Gastrocnemius medialis (tissue), 4 donors: ENCODE measurements at regions of chr1 and their contacts with region 1.

Region 1: DNA sequence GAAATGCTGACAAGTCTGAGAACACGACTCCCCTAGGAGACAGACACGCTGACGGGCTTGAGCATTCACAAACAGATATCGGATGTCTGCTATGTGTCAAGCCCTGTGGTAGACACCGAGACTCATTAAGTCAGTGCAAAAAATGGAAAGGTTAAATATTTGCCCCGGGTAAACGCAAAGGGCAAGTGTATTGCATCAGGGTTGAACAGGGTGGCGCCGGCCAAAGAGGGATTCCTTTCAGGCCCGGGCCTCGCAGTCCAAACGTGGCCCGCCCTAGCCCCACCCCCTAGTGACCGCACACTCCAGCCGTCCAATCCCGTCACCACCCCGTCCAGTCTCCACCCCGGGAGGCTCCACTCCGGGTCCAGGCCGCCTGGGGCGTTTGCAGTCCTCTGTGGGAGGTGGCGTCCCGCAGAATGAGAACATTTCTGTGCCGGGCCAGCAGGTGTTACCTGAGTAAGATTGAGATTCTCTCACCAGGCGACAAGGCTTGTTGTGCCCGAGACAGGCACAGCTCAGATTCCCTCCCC is 16.3 kb upstream of the TMEM9 start:
- DNase-seq: peak; percentile 99
- ATAC-seq: peak; percentile 70 to 76
- H3K4me3 ChIP-seq: peak overlapping the region; percentile 63 to 76 (median 70)
- H3K27ac ChIP-seq: peak overlapping the region; percentile 95 to 98 (median 96)
- H3K4me1 ChIP-seq: peaks cover 27 to 34% of the 10 kb centered on the region in 2 donors
- H3K27me3 ChIP-seq: no peaks in the 10 kb centered on the region
- CTCF ChIP-seq: no peak
- POLR2A ChIP-seq: peak; percentile 87 to 92

Region 2: GRCh38 chr1:201096035-201096434 is 74.6 kb before region 1 on chr1:
- in situ Hi-C with region 1: no loop called
- intact Hi-C with region 1: loop called (anchors 2 kb)
- DNase-seq: peak; percentile 88 to 98
- ATAC-seq: peak; percentile 60 to 68
- H3K4me3 ChIP-seq: no peak overlapping the region
- H3K27ac ChIP-seq: peak overlapping the region; percentile 89 to 98 (median 96)
- H3K4me1 ChIP-seq: peaks cover 76 to 88% of the 10 kb centered on the region in 2 donors
- H3K27me3 ChIP-seq: no peaks in the 10 kb centered on the region
- CTCF ChIP-seq: no peak
- POLR2A ChIP-seq: peak; percentile 11 to 23

Region 3: GRCh38 chr1:201114236-201115131 is 56.1 kb before region 1 on chr1:
- in situ Hi-C with region 1: no loop called
- intact Hi-C with region 1: loop called (anchors 5 kb)
- DNase-seq: peak; percentile 85 to 94
- ATAC-seq: peak; percentile 85 to 92
- H3K4me3 ChIP-seq: peak overlapping the region; percentile 59 to 84 (median 67)
- H3K27ac ChIP-seq: peak overlapping the region; percentile 89 to 98 (median 96)
- H3K4me1 ChIP-seq: peaks cover 38 to 47% of the 10 kb centered on the region in 2 donors
- H3K27me3 ChIP-seq: no peaks in the 10 kb centered on the region
- CTCF ChIP-seq: peak; percentile 86 to 97 (median 93)
- POLR2A ChIP-seq: peak; percentile 12 to 58

Region 4: DNA sequence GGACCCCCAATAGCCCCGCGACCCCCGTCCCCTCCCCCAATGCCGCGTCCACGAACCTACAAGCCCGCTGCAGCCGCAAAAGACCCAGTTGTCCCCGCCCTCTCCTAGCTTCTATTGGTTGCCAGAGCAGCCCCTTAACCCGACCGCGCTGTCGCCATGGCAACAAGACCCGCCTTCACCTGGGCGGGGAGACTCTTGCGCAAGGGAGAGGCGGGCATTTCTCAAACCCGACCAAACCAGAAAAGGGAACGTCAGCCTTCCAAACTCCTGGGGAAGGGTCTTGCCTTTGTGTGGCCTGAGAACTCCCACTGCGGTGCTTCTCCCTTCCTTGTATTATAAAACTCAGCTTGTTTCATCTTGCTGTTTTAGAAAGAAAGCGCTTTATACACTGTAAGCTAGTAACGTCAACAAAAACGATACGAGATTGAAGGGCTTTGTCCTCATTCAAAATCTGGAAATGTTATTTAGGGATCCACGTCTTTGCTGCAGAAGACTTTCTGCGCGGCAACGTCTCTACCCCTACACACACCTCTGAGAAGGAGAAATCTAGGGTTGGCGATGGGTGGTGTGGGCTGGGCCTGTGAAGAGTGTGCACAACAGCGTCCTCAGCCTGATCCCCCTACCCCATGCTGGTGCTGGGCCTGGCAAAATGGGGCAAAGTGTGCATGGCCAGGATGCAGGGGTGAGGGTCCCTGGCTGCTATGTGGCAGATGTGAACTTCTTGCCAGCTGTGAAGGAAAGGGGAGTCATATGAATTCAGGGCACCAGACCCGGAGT is 16.0 kb before region 1 on chr1 and contains the start of gene TMEM9:
- in situ Hi-C with region 1: no loop called
- intact Hi-C with region 1: loop called (anchors 1 kb)
- DNase-seq: peak; percentile 93 to 96
- ATAC-seq: peak; percentile 94 to 96
- H3K4me3 ChIP-seq: peak within 1 kb of the TSS; percentile 70 to 84 (median 77)
- H3K27ac ChIP-seq: peak within 1 kb of the TSS; percentile 73 to 78 (median 76)
- H3K4me1 ChIP-seq: peaks cover 19 to 33% of the 10 kb centered on the region in 2 donors
- H3K27me3 ChIP-seq: no peaks in the 10 kb centered on the region
- CTCF ChIP-seq: no peak
- POLR2A ChIP-seq: no peak
- total RNA-seq, gene TMEM9: 11.9 to 38.8 (median 13.0) TPM

Region 5: GRCh38 chr1:201184307-201185122 is 13.9 kb after region 1 on chr1:
- in situ Hi-C with region 1: no loop called
- intact Hi-C with region 1: loop called (anchors 1 kb)
- DNase-seq: peak; percentile 66 to 88
- ATAC-seq: peak; percentile 94 to 98
- H3K4me3 ChIP-seq: no peak overlapping the region
- H3K27ac ChIP-seq: peak overlapping the region; percentile 76 to 92 (median 84)
- H3K4me1 ChIP-seq: peaks cover 38 to 40% of the 10 kb centered on the region in 2 donors
- H3K27me3 ChIP-seq: no peaks in the 10 kb centered on the region
- CTCF ChIP-seq: peak; percentile 52 to 74 (median 71)
- POLR2A ChIP-seq: peak; percentile 16 to 21

Region 6: GRCh38 chr1:201419746-201420607 is 249.4 kb after region 1 on chr1:
- in situ Hi-C with region 1: no loop called
- intact Hi-C with region 1: loop called (anchors 5 kb)
- DNase-seq: peak in 1 of 2 donors; percentile 54
- ATAC-seq: peak in 1 of 2 donors; percentile 11
- H3K4me3 ChIP-seq: peak overlapping the region in 2 of 4 donors; percentile 2 to 37
- H3K27ac ChIP-seq: peak overlapping the region; percentile 93
- H3K4me1 ChIP-seq: peaks cover 55% of the 10 kb centered on the region in 2 donors
- H3K27me3 ChIP-seq: no peaks in the 10 kb centered on the region
- CTCF ChIP-seq: no peak
- POLR2A ChIP-seq: no peak

Region 7: DNA sequence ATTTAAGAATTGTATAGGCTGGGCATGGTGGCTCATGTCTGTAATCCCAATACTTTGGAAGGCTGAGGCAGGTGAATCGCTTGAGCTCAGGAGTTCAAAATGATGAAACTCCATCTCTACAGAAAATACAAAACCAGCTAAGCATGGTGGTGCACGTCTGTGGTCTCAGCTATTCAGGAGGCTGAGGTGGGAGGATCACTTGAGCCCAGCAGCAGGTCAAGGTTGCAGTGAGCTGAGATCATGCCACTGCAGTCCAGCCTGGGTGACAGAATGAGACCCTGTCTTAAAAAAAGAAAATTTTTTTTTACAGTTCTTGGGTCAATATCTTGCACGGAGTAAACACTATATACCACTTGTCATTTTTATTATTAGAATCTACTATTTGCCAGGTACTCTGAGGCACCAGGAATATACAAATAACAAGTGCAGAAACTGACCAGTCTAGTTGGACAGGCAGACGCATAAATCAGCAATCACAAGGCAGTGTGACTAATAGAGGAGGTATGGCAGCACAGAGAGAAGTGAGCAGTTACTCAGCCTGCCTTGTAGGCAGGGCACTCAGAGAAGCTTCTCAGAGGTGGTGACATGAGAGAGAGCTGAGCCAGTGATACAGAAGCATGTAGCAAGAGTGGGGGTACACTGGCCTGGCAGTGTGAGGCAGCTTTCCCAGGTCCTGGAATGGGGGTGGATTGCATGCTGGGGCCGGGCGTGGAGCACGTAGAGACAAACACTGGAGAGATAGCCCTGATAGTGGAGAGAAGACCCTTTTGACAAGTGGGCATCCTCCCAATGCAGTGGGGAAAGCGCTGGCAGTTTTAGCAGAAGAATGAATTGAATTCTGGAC is 290.4 kb after region 1 on chr1:
- in situ Hi-C with region 1: no loop called
- intact Hi-C with region 1: loop called (anchors 5 kb)
- DNase-seq: peak; percentile 84 to 90
- ATAC-seq: peak; percentile 71 to 77
- H3K4me3 ChIP-seq: peak overlapping the region in 3 of 4 donors; percentile 15 to 17 (median 15)
- H3K27ac ChIP-seq: peak overlapping the region; percentile 92 to 100 (median 100)
- H3K4me1 ChIP-seq: peaks cover 59 to 64% of the 10 kb centered on the region in 2 donors
- H3K27me3 ChIP-seq: no peaks in the 10 kb centered on the region
- CTCF ChIP-seq: no peak
- POLR2A ChIP-seq: peak in 1 of 2 donors; percentile 12